T-cell (primary cell): ENCODE measurements at regions of chr17 and their contacts with region 1.

Region 1: GRCh38 chr17:37650419-37651003 is 7.3 kb upstream of the DDX52 start:
- DNase-seq: no peak
- ATAC-seq: no peak
- H3K4me3 ChIP-seq: no peak overlapping the region
- H3K4me3 Mint-ChIP-seq: no peak overlapping the region
- H3K27ac ChIP-seq: no peak overlapping the region
- H3K27ac Mint-ChIP-seq: no peak overlapping the region
- H3K4me1 ChIP-seq: no peaks in the 10 kb centered on the region
- H3K4me1 Mint-ChIP-seq: no peaks in the 10 kb centered on the region
- H3K27me3 ChIP-seq: peaks cover 14 to 17% of the 10 kb centered on the region in 2 experiments
- H3K27me3 Mint-ChIP-seq: peaks cover 40 to 49% of the 10 kb centered on the region in 2 donors

Region 2: GRCh38 chr17:38598536-38598935 is 948.0 kb after region 1 on chr17:
- CTCF ChIA-PET with region 1: no interaction called
- POLR2A ChIA-PET with region 1: interaction called in 1 of 2 experiments, 13 read pairs
- DNase-seq: no peak
- ATAC-seq: no peak
- H3K4me3 ChIP-seq: no peak overlapping the region
- H3K4me3 Mint-ChIP-seq: no peak overlapping the region
- H3K27ac ChIP-seq: no peak overlapping the region
- H3K27ac Mint-ChIP-seq: no peak overlapping the region
- H3K4me1 ChIP-seq: peaks cover 0 to 2% of the 10 kb centered on the region in 2 experiments
- H3K4me1 Mint-ChIP-seq: peaks cover 3 to 7% (median 5%) of the 10 kb centered on the region in 3 donors
- H3K27me3 ChIP-seq: peaks cover 4 to 95% of the 10 kb centered on the region in 2 experiments
- H3K27me3 Mint-ChIP-seq: peaks cover 68 to 90% of the 10 kb centered on the region in 2 donors